CD14-positive monocyte (primary cell): ENCODE measurements at regions of chr1 and their contacts with region 1.

Region 1: DNA sequence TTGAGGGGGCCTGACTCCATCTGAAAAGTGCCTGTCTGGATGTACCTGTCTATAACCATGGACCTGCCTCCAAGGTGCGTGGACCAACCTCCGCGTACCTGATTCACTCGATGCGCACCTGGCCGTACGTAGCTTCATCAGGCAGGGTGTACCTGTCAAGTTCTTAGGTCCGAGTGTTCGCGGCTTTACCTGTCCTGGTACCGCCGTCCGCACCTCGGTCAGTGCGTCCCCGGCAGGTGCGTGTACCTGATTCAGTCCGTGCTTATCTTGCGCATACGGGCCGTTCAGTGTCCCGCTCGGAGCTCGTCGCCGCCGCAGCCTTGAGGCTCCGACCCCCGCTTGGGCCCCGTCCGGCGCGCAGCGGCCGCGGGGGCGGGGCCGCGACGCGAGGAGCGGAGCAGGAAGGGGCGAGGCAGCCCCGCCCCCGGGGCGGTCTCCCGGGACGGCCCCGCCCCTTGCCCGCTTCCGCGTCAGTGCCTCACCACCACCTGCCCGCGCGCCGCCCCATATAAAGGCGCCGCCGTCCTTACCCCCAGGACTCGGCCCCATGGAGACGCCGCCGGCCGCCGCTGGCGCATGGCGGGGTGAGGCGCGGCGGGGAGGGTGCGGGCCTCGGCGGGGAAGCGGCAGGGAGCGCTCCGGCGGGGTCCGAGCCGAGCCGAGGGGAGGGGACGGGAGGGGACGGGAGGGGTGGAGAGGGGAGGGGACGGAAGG is at the start of gene ZC3H12A:
- DNase-seq: peak; percentile 92 to 95 (median 93)
- H3K4me3 ChIP-seq: peak within 1 kb of the TSS; percentile 79 to 98 (median 91)
- H3K4me3 Mint-ChIP-seq: peak within 1 kb of the TSS; percentile 86 to 91
- H3K27ac ChIP-seq: peak within 1 kb of the TSS; percentile 96 to 99
- H3K27ac Mint-ChIP-seq: peak within 1 kb of the TSS; percentile 79 to 98 (median 95)
- H3K4me1 ChIP-seq: peaks cover 70 to 76% of the 10 kb centered on the region in 2 donors
- H3K4me1 Mint-ChIP-seq: peaks cover 77% of the 10 kb centered on the region
- H3K27me3 ChIP-seq: no peaks in the 10 kb centered on the region
- H3K27me3 Mint-ChIP-seq: peaks cover 2 to 15% (median 7%) of the 10 kb centered on the region in 3 donors
- CTCF ChIP-seq: no peak
- polyA plus RNA-seq, gene ZC3H12A: 5.2 to 155 (median 5.8) TPM

Region 2: DNA sequence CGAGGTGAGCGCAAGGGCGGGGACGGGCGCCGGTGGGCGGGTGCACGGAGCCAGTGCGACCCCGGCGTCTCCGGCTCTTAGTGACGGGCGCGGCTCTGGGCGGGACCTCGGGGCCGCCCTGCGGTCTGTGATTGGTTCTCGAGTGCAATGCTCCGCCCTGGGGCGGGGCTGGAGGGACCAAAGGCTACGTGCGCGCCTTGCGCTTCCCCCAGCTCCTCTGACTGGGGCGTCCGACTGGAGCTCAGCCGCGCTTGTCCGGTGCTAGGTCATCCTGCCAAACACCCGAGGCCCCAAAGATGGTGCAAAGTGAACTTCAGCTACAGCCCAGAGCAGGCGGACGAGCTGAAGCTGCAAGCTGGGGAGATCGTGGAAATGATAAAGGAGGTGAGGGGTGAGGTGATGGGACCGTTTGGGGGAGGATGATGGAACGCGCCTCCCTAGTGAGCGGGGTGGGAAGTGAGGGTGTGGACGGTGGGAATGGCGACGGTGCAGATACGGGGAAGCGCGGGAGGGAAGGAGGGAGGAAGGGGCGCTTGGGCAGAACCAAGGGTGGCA is 1167.2 kb before region 1 on chr1:
- intact Hi-C with region 1: loop called in 1 of 2 experiments (anchors 10 kb)
- DNase-seq: peak; percentile 86 to 91 (median 87)
- H3K4me3 ChIP-seq: peak overlapping the region; percentile 37 to 84 (median 64)
- H3K4me3 Mint-ChIP-seq: peak overlapping the region; percentile 92 to 93
- H3K27ac ChIP-seq: peak overlapping the region in 1 of 2 donors; percentile 46
- H3K27ac Mint-ChIP-seq: peak overlapping the region in 6 of 7 donors; percentile 26 to 91 (median 86)
- H3K4me1 ChIP-seq: peaks cover 26 to 35% of the 10 kb centered on the region in 2 donors
- H3K4me1 Mint-ChIP-seq: peaks cover 34% of the 10 kb centered on the region
- H3K27me3 ChIP-seq: peaks cover 0 to 4% of the 10 kb centered on the region in 2 donors
- H3K27me3 Mint-ChIP-seq: peaks cover 4 to 7% (median 5%) of the 10 kb centered on the region in 3 donors
- CTCF ChIP-seq: no peak

Region 3: GRCh38 chr1:37423810-37424209 is 50.4 kb before region 1 on chr1:
- intact Hi-C with region 1: no loop called
- DNase-seq: no peak
- H3K4me3 ChIP-seq: no peak overlapping the region
- H3K4me3 Mint-ChIP-seq: no peak overlapping the region
- H3K27ac ChIP-seq: no peak overlapping the region
- H3K27ac Mint-ChIP-seq: peak overlapping the region in 1 of 7 donors; percentile 10
- H3K4me1 ChIP-seq: no peaks in the 10 kb centered on the region
- H3K4me1 Mint-ChIP-seq: no peaks in the 10 kb centered on the region
- H3K27me3 ChIP-seq: no peaks in the 10 kb centered on the region
- H3K27me3 Mint-ChIP-seq: peaks cover 8 to 17% (median 10%) of the 10 kb centered on the region in 3 donors
- CTCF ChIP-seq: no peak

Region 4: DNA sequence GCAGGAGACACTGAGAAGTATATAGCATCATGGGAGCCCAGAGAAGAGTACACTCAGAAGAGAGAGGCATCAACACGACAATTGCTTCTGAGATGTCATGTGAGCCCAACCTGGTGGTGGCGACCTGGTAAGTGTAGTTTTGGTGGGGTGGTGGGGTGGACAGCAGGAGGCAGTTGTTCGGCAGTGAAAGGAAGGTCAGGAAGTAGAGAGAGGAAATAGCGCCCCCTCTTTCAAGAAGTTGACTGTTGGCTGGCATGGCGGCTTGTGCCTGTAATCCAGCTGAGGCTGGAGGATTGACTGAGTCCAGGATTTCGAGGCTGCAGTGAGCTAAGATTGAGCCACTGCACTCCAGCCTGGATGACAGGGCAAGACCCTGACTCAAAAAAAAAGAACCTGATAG is 147.9 kb after region 1 on chr1:
- intact Hi-C with region 1: no loop called
- DNase-seq: no peak
- H3K4me3 ChIP-seq: no peak overlapping the region
- H3K4me3 Mint-ChIP-seq: no peak overlapping the region
- H3K27ac ChIP-seq: no peak overlapping the region
- H3K27ac Mint-ChIP-seq: no peak overlapping the region
- H3K4me1 ChIP-seq: no peaks in the 10 kb centered on the region
- H3K4me1 Mint-ChIP-seq: no peaks in the 10 kb centered on the region
- H3K27me3 ChIP-seq: peaks cover 0 to 10% of the 10 kb centered on the region in 2 donors
- H3K27me3 Mint-ChIP-seq: peaks cover 17 to 36% (median 35%) of the 10 kb centered on the region in 3 donors
- CTCF ChIP-seq: no peak

Region 5: DNA sequence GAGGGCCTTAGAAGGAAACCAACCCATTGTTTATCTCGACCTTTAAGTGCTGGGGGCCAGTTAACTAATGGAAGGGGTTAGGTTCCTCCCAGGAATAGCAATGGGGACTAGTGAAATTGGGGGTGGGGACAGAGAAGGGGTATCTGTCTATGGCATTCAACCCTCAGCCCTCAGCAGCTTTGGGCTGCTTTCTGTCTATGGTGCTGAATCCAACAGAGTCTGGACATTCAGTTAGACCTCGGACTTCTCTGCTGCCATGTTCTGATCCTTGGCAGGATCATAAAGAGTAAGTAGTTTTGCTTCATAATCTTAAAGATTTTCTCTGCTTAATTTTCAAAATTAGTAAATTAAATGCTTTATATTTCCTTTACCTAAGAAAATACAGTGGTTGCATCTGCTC is 293.3 kb after region 1 on chr1:
- intact Hi-C with region 1: no loop called
- DNase-seq: no peak
- H3K4me3 ChIP-seq: no peak overlapping the region
- H3K4me3 Mint-ChIP-seq: no peak overlapping the region
- H3K27ac ChIP-seq: no peak overlapping the region
- H3K27ac Mint-ChIP-seq: no peak overlapping the region
- H3K4me1 ChIP-seq: no peaks in the 10 kb centered on the region
- H3K4me1 Mint-ChIP-seq: peaks cover 5% of the 10 kb centered on the region
- H3K27me3 ChIP-seq: peaks cover 49 to 74% of the 10 kb centered on the region in 2 donors
- H3K27me3 Mint-ChIP-seq: peaks cover 61 to 85% (median 68%) of the 10 kb centered on the region in 3 donors
- CTCF ChIP-seq: no peak